ENCODE measurements at regions of chr3 and their contacts with region 1.

Region 1: DNA sequence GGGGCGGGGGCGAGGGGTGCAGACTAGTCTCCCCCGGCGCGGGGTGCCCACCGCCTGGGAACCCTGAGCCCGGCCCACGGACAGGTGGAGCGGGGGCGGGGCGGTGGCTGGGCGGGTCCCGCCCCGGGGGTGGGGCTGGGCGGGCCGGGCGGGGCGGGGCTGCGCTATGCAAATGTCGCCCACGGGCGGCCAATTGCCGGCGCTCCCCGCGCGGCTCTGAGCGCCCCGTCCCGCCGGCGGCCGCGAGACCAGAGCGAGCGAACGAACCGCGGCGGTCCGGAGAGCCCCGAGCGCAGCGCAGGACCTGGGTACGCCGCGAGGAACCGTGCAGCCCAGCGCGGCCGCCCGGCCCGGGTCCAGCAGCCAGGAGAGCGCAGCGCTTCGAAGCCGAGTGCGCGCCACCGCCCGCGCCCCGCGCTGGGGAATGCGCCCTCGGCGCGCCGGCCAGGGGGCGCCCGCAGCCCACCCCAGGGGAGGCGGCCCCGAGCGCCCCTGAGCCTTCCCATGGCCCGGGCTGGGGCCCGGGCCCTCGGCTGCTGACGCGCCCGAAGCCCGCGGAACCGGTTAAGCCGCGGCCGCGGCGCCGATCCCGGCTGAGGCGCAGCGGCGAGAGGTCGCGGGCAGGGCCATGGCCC is at the start of gene SEMA3F:
- DNase-seq: peak; percentile 50 to 77
- H3K4me3 ChIP-seq: peak within 1 kb of the TSS; percentile 52
- H3K27ac ChIP-seq: no peak within 1 kb of the TSS
- H3K4me1 ChIP-seq: no peaks in the 10 kb centered on the region
- H3K27me3 ChIP-seq: no peaks in the 10 kb centered on the region
- CTCF ChIP-seq: no peak
- total RNA-seq, gene SEMA3F: 34.0 and 49.1 TPM in 2 replicates

Region 2: GRCh38 chr3:50121416-50122032 is 33.4 kb before region 1 on chr3:
- CTCF ChIA-PET with region 1: no interaction called
- POLR2A ChIA-PET with region 1: no interaction called
- intact Hi-C with region 1: loop called (anchors 1 kb)
- DNase-seq: peak; percentile 63 to 76
- H3K4me3 ChIP-seq: no peak overlapping the region
- H3K27ac ChIP-seq: no peak overlapping the region
- H3K4me1 ChIP-seq: 0 out of 2 replicates have a peak, but pooled peaks cover 4% of the 10 kb centered on the region
- H3K27me3 ChIP-seq: no peaks in the 10 kb centered on the region
- CTCF ChIP-seq: peak; percentile 87

Region 3: DNA sequence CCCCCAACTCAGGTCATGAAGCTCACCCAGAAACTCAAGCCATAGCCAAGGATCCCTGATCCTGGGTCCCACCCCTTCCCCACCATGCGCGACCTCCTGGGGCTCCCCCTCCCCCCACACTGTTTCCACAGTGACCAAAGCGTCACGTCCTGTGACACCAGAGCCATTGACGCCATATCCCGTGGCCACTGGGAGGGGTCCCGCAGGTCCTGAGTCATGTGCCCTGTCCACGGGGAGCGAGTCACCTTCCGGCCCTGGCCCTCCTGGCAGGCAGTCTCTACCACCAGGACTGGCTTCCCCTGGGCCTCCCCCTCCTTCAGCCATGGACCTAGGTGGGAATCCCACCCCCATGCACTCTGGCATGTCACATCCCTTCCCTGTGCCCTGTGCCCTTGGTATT is 15.7 kb after region 1 on chr3:
- CTCF ChIA-PET with region 1: no interaction called
- POLR2A ChIA-PET with region 1: no interaction called
- intact Hi-C with region 1: loop called (anchors 1 kb)
- DNase-seq: peak in 1 of 2 experiments; percentile 66
- H3K4me3 ChIP-seq: no peak overlapping the region
- H3K27ac ChIP-seq: no peak overlapping the region
- H3K4me1 ChIP-seq: peaks cover 15% of the 10 kb centered on the region
- H3K27me3 ChIP-seq: no peaks in the 10 kb centered on the region
- CTCF ChIP-seq: no peak

Region 4: DNA sequence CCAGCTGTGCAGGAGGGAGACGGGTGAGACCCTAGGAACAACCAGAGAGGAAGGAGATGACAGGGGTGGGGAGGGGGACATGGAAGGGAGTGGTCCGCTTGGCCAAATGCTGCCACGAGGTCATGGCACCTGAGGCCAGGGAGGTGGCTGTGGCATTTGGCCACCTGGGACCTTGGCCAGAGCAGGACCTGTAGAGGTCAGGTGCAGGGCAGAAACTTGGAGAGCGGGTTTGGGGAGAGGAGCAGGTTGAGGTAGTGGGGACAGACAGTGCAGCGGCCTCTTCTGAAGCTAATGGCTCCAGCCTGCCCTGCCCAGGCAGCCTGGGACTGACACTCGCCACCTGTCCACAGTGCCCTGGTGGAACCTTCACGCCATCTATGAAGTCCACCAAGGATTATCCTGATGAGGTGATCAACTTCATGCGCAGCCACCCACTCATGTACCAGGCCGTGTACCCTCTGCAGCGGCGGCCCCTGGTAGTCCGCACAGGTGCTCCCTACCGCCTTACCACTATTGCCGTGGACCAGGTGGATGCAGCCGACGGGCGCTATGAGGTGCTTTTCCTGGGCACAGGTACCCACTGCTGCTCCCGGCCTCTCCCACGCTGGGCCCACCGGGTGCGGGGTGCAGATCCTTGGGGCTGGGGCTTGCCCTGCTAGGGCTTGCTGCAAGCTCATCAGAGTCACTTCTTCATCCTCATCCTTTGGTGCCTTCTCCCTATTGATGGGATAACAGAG is 29.5 kb after region 1 on chr3:
- CTCF ChIA-PET with region 1: no interaction called
- POLR2A ChIA-PET with region 1: no interaction called
- intact Hi-C with region 1: loop called (anchors 1 kb)
- DNase-seq: peak; percentile 76 to 83
- H3K4me3 ChIP-seq: no peak overlapping the region
- H3K27ac ChIP-seq: no peak overlapping the region
- H3K4me1 ChIP-seq: peaks cover 16% of the 10 kb centered on the region
- H3K27me3 ChIP-seq: no peaks in the 10 kb centered on the region
- CTCF ChIP-seq: no peak

Region 5: DNA sequence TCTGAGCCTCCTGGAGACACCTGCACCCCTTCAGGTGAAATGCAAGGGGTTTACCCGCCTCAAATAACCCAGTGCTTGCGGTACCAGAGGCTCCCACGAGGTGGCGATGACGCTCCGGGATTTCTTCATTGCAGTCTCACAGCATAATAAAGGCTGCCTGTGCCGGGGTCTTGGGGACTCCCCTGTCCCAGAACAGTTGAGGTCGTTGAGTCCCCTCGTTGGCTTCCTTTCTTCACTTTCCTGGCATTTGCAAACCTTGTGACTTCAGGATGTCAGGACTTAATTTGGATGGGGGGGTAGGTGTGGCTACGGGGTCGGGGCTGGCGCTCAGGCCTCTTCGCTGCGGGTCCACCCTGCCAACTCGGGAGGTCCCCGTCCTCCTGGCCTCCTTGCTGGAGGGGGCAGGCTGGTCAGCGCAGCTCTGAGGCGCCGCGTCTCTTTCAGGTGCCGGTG is 37.8 kb after region 1 on chr3:
- CTCF ChIA-PET with region 1: interaction called, 7 read pairs
- POLR2A ChIA-PET with region 1: no interaction called
- intact Hi-C with region 1: loop called (anchors 1 kb)
- DNase-seq: peak; percentile 47 to 78
- H3K4me3 ChIP-seq: no peak overlapping the region
- H3K27ac ChIP-seq: no peak overlapping the region
- H3K4me1 ChIP-seq: 0 out of 2 replicates have a peak, but pooled peaks cover 7% of the 10 kb centered on the region
- H3K27me3 ChIP-seq: no peaks in the 10 kb centered on the region
- CTCF ChIP-seq: peak; percentile 91

Region 6: GRCh38 chr3:50272911-50273693 is 118.1 kb after region 1 on chr3:
- CTCF ChIA-PET with region 1: no interaction called
- POLR2A ChIA-PET with region 1: no interaction called
- intact Hi-C with region 1: no loop called
- DNase-seq: peak; percentile 61 to 85
- H3K4me3 ChIP-seq: no peak overlapping the region
- H3K27ac ChIP-seq: no peak overlapping the region
- H3K4me1 ChIP-seq: peaks cover 44% of the 10 kb centered on the region
- H3K27me3 ChIP-seq: no peaks in the 10 kb centered on the region
- CTCF ChIP-seq: peak; percentile 91